PC-9 (cell line): ENCODE measurements at regions of chr3 and their contacts with region 1.

Region 1: GRCh38 chr3:25582242-25582641 is 82.5 kb downstream of the TOP2B start:
- DNase-seq: peak; percentile 82 to 83
- H3K4me3 ChIP-seq: no peak overlapping the region
- H3K27ac ChIP-seq: peak overlapping the region; percentile 92
- H3K4me1 ChIP-seq: peaks cover 23% of the 10 kb centered on the region
- H3K27me3 ChIP-seq: no peaks in the 10 kb centered on the region
- CTCF ChIP-seq: no peak

Region 2: GRCh38 chr3:24709956-24710355 is 872.3 kb before region 1 on chr3:
- CTCF ChIA-PET with region 1: no interaction called
- POLR2A ChIA-PET with region 1: interaction called, 15 read pairs
- intact Hi-C with region 1: no loop called
- DNase-seq: no peak
- H3K4me3 ChIP-seq: no peak overlapping the region
- H3K27ac ChIP-seq: no peak overlapping the region
- H3K4me1 ChIP-seq: no peaks in the 10 kb centered on the region
- H3K27me3 ChIP-seq: no peaks in the 10 kb centered on the region
- CTCF ChIP-seq: no peak

Region 3: GRCh38 chr3:25455441-25456132 is 126.7 kb before region 1 on chr3:
- CTCF ChIA-PET with region 1: no interaction called
- POLR2A ChIA-PET with region 1: no interaction called
- intact Hi-C with region 1: loop called (anchors 2 kb)
- DNase-seq: peak in 1 of 2 experiments; percentile 62
- H3K4me3 ChIP-seq: no peak overlapping the region
- H3K27ac ChIP-seq: peak overlapping the region; percentile 64
- H3K4me1 ChIP-seq: peaks cover 56% of the 10 kb centered on the region
- H3K27me3 ChIP-seq: no peaks in the 10 kb centered on the region
- CTCF ChIP-seq: no peak